Prostate gland (tissue), 2 donors: ENCODE measurements at regions of chr9 and their contacts with region 1.

Region 1: DNA sequence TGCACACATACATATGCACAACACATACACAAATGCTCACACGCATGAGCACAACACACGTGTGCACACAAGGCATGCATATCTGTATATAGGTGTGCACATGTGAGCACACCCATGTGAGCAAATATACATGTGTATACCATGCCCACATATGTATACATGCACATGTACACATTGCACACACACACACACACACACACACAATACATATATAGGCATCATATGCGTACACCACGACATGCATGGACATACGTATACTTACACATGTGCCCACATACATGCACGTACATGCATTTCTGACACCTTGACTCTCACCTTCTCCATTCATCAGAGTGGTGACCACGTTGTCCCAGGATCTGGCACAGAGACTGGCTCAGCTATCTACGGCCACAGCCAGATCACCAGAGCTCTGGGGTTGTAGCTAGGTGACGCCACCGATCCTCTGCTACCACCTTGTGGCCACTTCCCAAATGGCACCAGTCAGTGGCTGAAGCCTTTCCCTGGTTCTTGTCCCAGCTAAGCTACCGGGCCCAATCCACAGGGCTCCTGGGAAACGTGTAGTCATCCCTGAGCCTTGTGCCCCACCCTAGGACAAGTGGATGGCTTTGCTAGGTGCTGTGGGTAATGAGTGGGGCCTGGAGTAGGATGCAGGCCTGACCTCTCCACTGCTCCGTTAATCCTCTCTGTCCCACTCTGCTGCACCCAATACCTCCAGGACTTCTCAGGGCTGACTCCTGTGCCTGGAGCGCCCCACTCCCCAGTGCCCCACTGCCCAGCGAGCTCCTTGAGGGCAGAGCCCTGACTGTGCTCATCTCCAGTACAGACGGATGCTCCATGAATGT is 194.4 kb downstream of the RGS3 start:
- DNase-seq: peak; percentile 84
- H3K4me3 ChIP-seq: no peak overlapping the region
- H3K27ac ChIP-seq: no peak overlapping the region
- H3K4me1 ChIP-seq: no peaks in the 10 kb centered on the region
- H3K27me3 ChIP-seq: no peaks in the 10 kb centered on the region
- CTCF ChIP-seq: peak; percentile 72 to 95 (median 94)
- POLR2A ChIP-seq: no peak

Region 2: GRCh38 chr9:113446323-113446740 is 211.6 kb before region 1 on chr9:
- intact Hi-C with region 1: loop called (anchors 2 kb)
- DNase-seq: no peak
- H3K4me3 ChIP-seq: no peak overlapping the region
- H3K27ac ChIP-seq: no peak overlapping the region
- H3K4me1 ChIP-seq: no peaks in the 10 kb centered on the region
- H3K27me3 ChIP-seq: no peaks in the 10 kb centered on the region
- CTCF ChIP-seq: peak; percentile 27 to 80 (median 77)
- POLR2A ChIP-seq: no peak